ENCODE measurements at regions of chr2 and their contacts with region 1.

Region 1: DNA sequence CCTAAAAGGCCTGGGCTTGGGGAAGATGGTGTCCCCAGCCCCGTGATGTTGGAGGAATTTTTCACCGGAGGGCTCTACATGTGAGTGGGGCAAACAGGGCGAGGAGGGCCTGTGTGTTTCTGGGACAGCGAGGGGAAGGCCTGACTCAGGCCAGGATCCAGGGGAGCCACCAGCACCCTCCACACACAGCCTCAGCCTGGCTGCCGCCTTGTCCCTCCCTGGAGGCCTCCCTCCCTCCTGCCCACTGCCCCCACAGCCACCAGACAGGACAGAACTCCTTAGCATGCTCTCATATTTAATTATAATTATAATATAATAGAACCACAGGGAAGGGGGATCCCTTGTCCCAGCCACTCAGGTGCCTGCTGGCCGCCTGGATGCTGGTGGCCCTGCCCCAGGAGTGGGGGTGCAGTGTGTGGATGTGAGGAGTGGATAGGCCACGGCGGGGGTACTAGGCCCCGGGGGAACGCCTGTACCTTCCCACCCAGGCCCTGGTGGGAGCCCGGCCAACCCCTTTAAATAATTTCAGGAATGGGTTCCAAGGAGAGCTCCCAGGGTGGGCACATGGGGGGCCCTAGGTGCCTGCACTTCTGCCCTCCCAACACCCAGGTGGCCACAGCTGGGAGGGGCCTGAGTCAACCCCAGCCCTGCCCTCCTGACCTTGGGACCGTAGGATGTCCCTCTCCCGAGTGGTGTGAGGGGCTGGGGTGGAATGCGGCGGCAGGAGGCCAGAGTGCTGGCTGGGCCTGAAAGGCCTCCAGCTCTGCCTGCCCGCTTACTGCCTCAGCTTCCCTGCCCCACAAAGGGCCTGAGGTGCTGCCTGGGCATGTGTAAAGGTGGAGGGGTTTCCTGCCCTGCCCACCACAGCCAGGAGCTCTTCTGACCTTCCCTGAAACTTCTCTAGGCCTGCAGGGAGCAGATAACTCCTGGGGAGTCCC is 8.8 kb downstream of the PDCD1 start:
- DNase-seq: peak; percentile 7
- ATAC-seq: no peak
- H3K4me3 Mint-ChIP-seq: no peak overlapping the region
- H3K27ac Mint-ChIP-seq: no peak overlapping the region
- H3K4me1 Mint-ChIP-seq: peaks cover 19% of the 10 kb centered on the region
- H3K27me3 Mint-ChIP-seq: no peaks in the 10 kb centered on the region

Region 2: DNA sequence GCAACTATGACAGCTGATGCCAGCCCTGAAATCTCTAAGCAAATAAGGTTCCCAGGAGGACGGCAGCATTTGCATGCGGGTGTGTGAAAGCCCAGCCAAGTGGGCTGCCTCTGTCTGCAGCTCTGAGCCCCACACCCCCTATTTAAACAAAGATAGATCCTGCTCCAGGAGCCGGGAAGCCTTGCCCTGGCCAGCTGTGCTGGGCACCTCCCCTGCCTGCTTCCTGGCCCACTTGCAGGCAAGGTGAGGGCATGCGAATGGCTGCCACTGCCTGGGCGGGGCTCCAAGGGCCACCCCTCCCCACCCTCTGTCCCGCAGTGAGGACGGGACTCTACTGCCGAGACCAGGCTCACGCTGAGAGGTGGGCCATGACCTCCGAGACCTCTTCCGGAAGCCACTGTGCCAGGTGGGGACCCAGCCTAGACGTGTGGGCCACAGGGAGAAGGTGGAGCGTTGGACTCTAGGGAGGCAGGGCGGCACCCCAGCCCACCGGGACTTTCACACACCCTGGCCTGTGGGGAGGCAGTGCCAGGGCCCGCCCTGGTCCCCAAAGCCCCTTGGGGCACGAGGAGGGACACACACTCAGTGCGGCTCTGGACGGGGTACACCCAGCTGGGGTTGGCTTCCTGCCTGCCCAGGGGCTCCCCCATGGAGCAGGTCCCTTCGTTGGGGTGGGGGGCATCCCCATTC is 661.4 kb before region 1 on chr2 and contains the start of gene ANO7:
- CTCF ChIA-PET with region 1: no interaction called
- POLR2A ChIA-PET with region 1: no interaction called
- intact Hi-C with region 1: no loop called
- DNase-seq: no peak
- ATAC-seq: no peak
- H3K4me3 Mint-ChIP-seq: no peak within 1 kb of the TSS
- H3K27ac Mint-ChIP-seq: no peak within 1 kb of the TSS
- H3K4me1 Mint-ChIP-seq: no peaks in the 10 kb centered on the region
- H3K27me3 Mint-ChIP-seq: no peaks in the 10 kb centered on the region
- total RNA-seq, gene ANO7: 2.1 to 2.4 TPM

Region 3: DNA sequence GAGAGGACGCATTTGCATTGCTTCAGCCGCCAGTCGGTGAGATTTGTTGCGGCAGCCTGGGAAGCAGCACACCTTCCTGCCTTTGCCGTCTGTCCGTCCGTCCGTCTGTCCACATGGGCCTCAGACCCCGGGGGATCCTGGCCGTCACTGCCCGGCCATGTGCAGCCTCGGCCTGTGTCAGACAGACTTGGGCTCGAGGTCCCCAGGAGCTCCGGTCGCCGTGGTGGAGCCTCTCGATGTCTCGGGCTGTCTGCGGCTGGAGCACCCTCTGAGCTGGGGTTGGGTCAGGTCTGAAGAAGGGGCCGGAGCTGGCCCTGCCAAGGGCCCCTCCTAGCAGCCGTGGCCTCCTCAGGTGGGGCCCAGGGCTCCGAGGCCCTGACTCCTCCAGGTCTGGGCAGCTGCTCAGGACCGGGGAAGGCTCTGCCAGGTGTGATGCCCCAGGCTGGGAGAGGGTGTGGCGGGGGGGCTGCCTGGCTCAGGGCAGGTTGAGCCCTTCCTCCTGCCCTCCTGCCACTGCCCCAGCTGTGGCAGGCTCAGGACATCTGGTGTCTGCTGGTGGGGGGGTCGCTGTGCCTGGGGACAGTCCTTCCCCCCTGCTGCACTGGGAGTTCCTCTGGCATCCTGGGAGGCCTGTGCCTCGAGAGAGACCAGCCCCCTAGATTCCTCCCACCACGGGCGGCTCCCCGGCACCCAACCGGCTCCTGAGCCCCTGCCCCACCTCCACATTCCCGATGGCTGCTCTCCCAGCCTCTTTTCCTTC is 29.1 kb before region 1 on chr2:
- CTCF ChIA-PET with region 1: no interaction called
- POLR2A ChIA-PET with region 1: no interaction called
- intact Hi-C with region 1: loop called in 1 of 2 experiments (anchors 1 kb)
- DNase-seq: no peak
- ATAC-seq: no peak
- H3K4me3 Mint-ChIP-seq: no peak overlapping the region
- H3K27ac Mint-ChIP-seq: no peak overlapping the region
- H3K4me1 Mint-ChIP-seq: peaks cover 5% of the 10 kb centered on the region
- H3K27me3 Mint-ChIP-seq: peaks cover 13% of the 10 kb centered on the region